ENCODE measurements at regions of chr1 and their contacts with region 1.

Region 1: DNA sequence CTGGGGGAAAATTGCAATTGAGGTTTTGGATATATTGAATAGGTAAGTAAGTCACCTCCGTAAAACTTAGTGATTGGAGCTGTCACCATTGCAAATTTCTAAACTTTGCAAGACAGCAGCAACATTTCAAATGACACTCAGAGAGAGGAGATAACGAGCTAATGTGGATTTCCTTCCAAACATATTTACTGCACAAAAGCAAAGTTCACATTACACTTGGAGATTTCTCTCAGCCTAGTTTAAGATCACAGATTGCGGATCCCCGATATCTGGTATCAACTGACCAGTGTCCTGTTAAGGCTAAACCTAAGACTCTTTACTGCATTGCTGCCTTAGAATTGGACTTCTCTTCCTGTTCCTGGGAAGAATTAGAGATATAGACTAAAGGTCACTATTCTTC is 47.5 kb downstream of the ZNF697 start:
- DNase-seq: no peak
- ATAC-seq: no peak
- H3K4me3 ChIP-seq: no peak overlapping the region
- H3K4me3 Mint-ChIP-seq: no peak overlapping the region
- H3K27ac ChIP-seq: no peak overlapping the region
- H3K27ac Mint-ChIP-seq: no peak overlapping the region
- H3K4me1 ChIP-seq: no peaks in the 10 kb centered on the region
- H3K4me1 Mint-ChIP-seq: no peaks in the 10 kb centered on the region
- H3K27me3 ChIP-seq: no peaks in the 10 kb centered on the region
- H3K27me3 Mint-ChIP-seq: peaks cover 0 to 4% of the 10 kb centered on the region in 2 donors
- CTCF ChIP-seq: no peak

Region 2: GRCh38 chr1:119554183-119554582 is 46.4 kb before region 1 on chr1:
- intact Hi-C with region 1: loop called (anchors 1 kb)
- DNase-seq: no peak
- ATAC-seq: no peak
- H3K4me3 ChIP-seq: no peak overlapping the region
- H3K4me3 Mint-ChIP-seq: no peak overlapping the region
- H3K27ac ChIP-seq: no peak overlapping the region
- H3K27ac Mint-ChIP-seq: no peak overlapping the region
- H3K4me1 ChIP-seq: no peaks in the 10 kb centered on the region
- H3K4me1 Mint-ChIP-seq: no peaks in the 10 kb centered on the region
- H3K27me3 ChIP-seq: no peaks in the 10 kb centered on the region
- H3K27me3 Mint-ChIP-seq: no peaks in the 10 kb centered on the region
- CTCF ChIP-seq: no peak